ENCODE measurements at regions of chr1 and their contacts with region 1.

Region 1: GRCh38 chr1:23634842-23635651 is 56.6 kb upstream of the RPL11 start:
- DNase-seq: peak; percentile 78
- H3K4me3 Mint-ChIP-seq: peak overlapping the region; percentile 41
- H3K27ac Mint-ChIP-seq: peak overlapping the region; percentile 68
- H3K4me1 Mint-ChIP-seq: peaks cover 27% of the 10 kb centered on the region
- H3K27me3 Mint-ChIP-seq: no peaks in the 10 kb centered on the region

Region 2: DNA sequence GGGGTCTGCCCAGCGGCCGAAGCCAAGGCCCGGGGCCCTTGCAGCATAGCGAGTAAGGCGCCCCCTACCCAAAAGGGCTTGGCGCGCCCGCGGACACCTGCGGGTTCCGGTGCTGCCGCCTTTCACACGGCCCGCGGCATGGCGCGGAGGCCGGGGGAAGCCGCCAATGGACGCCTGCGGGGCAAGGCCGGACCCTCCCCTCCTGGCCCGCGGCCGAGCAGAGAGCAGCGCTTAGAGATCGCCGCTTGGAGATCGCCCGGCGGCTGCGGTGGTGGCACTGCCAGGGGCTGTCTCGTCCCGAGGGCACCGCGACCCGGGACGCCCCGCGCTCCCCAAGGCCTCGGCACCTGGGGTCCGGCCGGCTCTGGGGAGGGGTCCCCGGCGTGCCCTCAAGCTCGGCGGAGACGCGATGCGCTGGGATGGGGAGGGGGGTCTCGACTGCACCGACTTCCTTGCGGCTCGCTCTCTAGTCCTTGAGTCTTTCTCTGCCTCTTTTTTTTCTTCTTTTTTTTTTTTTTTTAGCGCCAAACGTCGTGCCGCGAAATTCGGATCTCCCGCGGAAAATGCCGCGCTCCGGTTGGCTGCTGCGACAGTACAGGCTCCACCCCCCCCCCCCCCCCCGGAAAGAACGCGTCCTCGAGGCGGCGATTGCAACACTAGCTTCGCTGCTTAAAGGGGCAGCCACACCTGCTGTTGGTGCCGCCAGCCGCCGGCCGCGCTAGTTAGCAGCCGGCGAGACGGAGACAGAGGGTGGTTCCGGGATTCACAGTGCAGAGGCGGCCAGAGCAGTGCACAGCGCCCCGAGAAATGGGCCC is 104.1 kb before region 1 on chr1 and contains the start of gene E2F2:
- CTCF ChIA-PET with region 1: interaction called, 32 read pairs
- intact Hi-C with region 1: no loop called
- DNase-seq: peak; percentile 87
- H3K4me3 Mint-ChIP-seq: peak within 1 kb of the TSS; percentile 91
- H3K27ac Mint-ChIP-seq: peak within 1 kb of the TSS; percentile 95
- H3K4me1 Mint-ChIP-seq: peaks cover 56% of the 10 kb centered on the region
- H3K27me3 Mint-ChIP-seq: peaks cover 2% of the 10 kb centered on the region
- total RNA-seq, gene E2F2: 31.3 to 33.8 TPM

Region 3: GRCh38 chr1:23564529-23565122 is 70.4 kb before region 1 on chr1:
- CTCF ChIA-PET with region 1: interaction called, 25 read pairs
- intact Hi-C with region 1: no loop called
- DNase-seq: no peak
- H3K4me3 Mint-ChIP-seq: no peak overlapping the region
- H3K27ac Mint-ChIP-seq: no peak overlapping the region
- H3K4me1 Mint-ChIP-seq: peaks cover 40% of the 10 kb centered on the region
- H3K27me3 Mint-ChIP-seq: peaks cover 13% of the 10 kb centered on the region

Region 4: GRCh38 chr1:23591460-23592208 is 43.4 kb before region 1 on chr1:
- CTCF ChIA-PET with region 1: interaction called, 8 read pairs
- intact Hi-C with region 1: loop called (anchors 2 kb)
- DNase-seq: peak; percentile 88
- H3K4me3 Mint-ChIP-seq: peak overlapping the region; percentile 34
- H3K27ac Mint-ChIP-seq: peak overlapping the region; percentile 85
- H3K4me1 Mint-ChIP-seq: peaks cover 68% of the 10 kb centered on the region
- H3K27me3 Mint-ChIP-seq: no peaks in the 10 kb centered on the region

Region 5: DNA sequence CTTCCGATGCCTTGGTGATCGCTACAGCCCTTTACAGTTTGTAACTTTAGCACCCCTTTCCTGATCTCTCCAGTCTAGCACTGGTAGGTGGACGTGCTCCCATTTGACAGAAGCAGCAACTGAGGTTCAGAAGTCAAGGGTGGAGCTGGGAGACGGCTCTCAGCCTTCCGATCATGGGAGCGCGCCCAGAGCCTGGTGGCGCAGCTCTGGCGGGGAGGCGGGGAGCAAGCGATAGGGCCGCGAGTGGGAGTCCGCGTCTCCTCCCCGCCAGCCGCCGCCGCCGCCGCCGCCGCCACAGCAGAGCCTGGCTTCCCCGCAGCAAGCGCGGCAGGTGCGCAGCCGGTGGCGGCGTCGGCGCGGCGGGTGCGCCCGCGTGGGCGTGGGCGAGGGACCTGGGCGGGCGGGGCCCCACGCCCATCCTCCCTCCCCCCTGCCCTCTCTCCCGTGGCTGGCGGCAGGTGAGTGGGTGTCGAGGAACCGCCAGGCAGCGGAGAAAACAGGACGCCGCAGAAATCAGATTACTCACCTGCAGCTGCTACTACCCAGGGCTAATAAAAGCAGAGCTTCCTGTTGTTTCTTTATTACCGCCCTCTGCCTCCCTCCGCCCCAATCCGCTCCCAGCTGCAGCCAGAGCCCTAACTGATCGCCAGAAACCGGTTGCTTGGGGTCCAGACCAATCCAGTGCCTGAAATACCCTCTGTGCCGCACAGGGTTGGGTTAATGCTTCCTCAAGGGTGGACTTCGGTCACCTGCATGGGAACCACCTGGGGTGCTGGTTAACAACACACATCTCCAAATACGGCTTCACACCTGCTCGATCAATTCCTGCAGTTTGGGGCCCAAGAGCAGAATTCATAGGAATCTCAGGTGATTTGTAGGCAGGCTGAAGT is 15.5 kb before region 1 on chr1:
- CTCF ChIA-PET with region 1: interaction called, 29 read pairs
- intact Hi-C with region 1: loop called (anchors 1 kb)
- DNase-seq: peak; percentile 91
- H3K4me3 Mint-ChIP-seq: peak overlapping the region; percentile 67
- H3K27ac Mint-ChIP-seq: peak overlapping the region; percentile 69
- H3K4me1 Mint-ChIP-seq: peaks cover 84% of the 10 kb centered on the region
- H3K27me3 Mint-ChIP-seq: no peaks in the 10 kb centered on the region

Region 6: DNA sequence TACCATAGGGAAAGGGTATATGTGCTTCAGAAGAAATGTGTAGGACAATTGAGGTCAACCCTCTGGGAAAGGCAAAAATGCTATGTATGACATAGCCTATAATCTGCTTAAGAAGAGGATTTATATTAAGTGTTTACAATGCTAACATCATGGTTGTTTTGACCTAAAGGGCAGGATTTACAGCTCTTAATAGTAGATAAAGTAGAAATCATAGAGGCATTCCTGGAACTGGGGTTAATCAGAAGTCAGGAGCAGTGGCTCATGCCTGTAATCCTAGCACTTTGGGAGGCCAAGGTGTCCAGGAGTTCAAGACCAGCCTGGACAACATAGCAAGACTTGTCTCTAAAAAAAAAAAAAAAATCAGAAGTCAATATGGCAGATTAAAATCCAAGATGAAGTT is 47.9 kb after region 1 on chr1:
- CTCF ChIA-PET with region 1: no interaction called
- intact Hi-C with region 1: no loop called
- DNase-seq: no peak
- H3K4me3 Mint-ChIP-seq: no peak overlapping the region
- H3K27ac Mint-ChIP-seq: no peak overlapping the region
- H3K4me1 Mint-ChIP-seq: no peaks in the 10 kb centered on the region
- H3K27me3 Mint-ChIP-seq: peaks cover 12% of the 10 kb centered on the region